ENCODE measurements at regions of chr11 and their contacts with region 1.

Region 1: DNA sequence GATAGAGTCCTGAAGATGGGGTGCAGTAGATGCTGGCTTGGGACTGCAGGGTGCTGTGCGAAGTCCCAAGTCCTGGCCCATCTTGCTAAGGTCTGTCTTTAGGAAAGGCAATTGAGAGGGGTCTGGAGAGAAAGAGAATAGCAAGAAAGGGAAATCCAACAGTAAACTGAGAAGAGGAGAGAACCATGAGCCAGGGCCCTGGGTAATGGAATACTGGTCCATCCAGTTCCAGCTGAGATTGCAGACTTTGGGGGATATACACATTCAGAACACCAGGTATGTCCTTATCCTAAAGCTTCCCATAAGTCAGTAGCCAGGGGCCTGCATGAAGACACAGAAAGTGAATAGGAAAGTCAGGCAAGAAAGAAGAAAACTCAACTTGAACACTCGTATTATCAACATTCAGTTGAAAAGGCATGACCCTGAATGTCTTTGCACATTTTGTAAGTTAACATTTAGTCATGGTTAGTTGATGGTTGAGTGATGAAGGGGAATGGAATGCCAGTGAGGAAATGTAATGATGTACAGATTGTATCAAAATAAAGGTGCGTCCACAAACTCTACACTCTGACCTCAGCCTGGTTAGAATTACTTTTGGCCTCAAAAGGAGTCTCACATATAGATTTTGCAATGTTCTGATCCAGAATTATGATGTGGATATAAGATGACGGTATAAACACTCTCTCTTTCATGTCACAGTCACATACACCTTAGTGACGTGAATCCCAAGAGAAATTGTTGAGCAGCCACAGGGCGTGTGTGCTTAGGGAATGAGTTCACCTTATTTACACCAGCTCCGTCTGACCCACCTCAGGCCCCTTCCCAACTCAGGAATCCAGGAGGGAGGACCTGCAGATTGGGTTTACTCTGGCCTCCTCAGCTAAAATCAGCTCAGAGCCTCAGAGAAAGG is 100.3 kb downstream of the RDX start:
- DNase-seq: no peak
- H3K4me3 Mint-ChIP-seq: peak overlapping the region; percentile 8
- H3K27ac Mint-ChIP-seq: peak overlapping the region; percentile 88
- H3K4me1 Mint-ChIP-seq: peaks cover 57% of the 10 kb centered on the region
- H3K27me3 Mint-ChIP-seq: no peaks in the 10 kb centered on the region
- CTCF ChIP-seq: no peak

Region 2: DNA sequence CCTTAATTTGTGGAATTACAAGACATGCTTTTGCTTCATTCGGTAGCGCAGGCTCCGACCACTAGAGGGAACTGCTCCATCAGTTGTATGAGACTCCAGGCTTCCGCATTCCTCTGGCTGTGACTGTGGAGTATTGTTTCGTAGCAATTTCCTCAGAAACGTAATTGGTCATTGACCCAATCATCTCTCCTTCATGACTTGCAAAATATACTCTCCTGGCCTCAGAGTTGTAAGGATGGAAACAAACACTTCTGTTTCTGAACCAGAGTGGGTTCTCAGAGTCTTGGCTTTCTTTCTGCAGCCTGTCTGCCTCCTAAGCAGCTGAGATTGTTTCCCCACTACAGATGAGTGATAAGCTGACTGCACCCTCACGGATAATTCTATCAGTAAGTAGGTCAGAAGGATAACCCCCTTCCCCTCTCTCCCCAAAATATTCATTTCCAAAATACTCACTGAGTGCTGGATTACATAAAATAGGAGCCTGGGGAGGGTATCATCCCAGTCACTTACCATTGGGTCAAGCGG is 249.7 kb before region 1 on chr11:
- CTCF ChIA-PET with region 1: no interaction called
- intact Hi-C with region 1: loop called (anchors 2 kb)
- DNase-seq: peak; percentile 76
- H3K4me3 Mint-ChIP-seq: peak overlapping the region; percentile 35
- H3K27ac Mint-ChIP-seq: peak overlapping the region; percentile 19
- H3K4me1 Mint-ChIP-seq: peaks cover 10% of the 10 kb centered on the region
- H3K27me3 Mint-ChIP-seq: no peaks in the 10 kb centered on the region
- CTCF ChIP-seq: peak; percentile 44

Region 3: GRCh38 chr11:110362971-110363509 is 166.9 kb after region 1 on chr11:
- CTCF ChIA-PET with region 1: interaction called, 5 read pairs
- intact Hi-C with region 1: loop called (anchors 1 kb)
- DNase-seq: peak; percentile 11
- H3K4me3 Mint-ChIP-seq: no peak overlapping the region
- H3K27ac Mint-ChIP-seq: peak overlapping the region; percentile 67
- H3K4me1 Mint-ChIP-seq: peaks cover 19% of the 10 kb centered on the region
- H3K27me3 Mint-ChIP-seq: no peaks in the 10 kb centered on the region
- CTCF ChIP-seq: no peak

Measured in Calu3 (cell line).